Head of caudate nucleus (tissue), 42 donors: ENCODE measurements at regions of chr7 and their contacts with region 1.

Region 1: DNA sequence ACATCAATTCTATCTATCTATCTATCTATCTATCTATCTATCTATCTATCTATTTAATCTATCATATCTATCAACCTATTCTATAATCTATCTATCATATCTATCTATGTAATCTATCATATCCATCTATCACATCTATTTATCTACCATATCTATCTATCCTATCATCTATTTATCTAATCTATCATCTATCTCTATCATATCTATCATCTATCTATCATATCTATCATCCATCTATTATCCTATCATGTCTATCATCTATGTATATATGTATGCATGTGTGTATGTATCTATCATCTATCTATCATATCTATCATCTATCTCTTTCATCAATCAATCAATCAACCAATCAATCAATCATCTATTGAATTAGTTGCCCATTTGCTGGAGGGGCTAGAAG is 159.3 kb upstream of the GALNT17 start:
- DNase-seq: no peak

Region 2: GRCh38 chr7:70953796-70954195 is 18.9 kb before region 1 on chr7:
- intact Hi-C with region 1: loop called (anchors 2 kb)
- DNase-seq: no peak